A673 (cell line): ENCODE measurements at regions of chr4 and their contacts with region 1.

Region 1: DNA sequence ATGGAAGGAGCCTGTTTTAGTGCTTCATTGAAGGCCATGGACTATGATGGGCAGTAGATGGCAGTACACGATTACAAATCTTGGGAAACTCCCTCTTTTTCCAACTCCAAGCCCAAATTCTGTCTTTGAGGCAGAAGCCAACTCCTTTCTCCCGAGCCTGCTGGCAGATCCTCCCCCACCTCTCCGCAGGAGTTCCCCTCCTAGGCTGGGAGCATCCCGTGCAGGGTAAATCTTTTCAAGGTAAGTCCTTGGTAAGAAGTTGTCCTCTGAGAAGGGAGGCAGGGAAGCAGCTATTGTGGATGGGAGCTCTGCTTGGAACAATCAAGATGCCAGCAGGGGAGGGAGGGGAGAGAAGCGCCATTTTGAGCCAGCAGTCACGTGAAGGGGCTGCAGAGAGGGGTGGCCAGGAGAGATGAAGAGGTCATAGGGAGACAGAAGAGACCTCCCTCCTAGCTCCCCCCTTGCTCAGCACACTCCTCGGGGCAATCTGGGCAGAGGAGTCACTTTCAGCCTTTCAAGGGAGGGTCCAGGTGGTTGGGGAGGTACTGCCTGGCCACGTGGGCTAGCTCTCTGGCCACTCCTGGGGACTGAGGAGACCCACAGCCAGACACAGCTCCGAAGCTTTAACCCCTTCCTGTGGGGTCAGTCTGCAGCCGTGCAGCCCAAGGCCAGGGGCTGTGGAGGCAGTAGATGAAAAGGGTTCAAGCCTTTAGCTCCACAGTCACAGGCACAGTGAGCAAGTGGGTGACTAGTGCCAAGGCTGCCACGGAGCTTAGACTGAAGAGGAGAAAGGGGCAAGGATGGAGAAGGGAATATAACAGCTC is 9.6 kb downstream of the CC2D2A start:
- DNase-seq: peak; percentile 92
- H3K4me3 ChIP-seq: peak overlapping the region; percentile 59
- H3K27ac ChIP-seq: peak overlapping the region; percentile 69
- H3K4me1 ChIP-seq: peaks cover 9% of the 10 kb centered on the region
- H3K27me3 ChIP-seq: no peaks in the 10 kb centered on the region
- CTCF ChIP-seq: peak; percentile 82

Region 2: DNA sequence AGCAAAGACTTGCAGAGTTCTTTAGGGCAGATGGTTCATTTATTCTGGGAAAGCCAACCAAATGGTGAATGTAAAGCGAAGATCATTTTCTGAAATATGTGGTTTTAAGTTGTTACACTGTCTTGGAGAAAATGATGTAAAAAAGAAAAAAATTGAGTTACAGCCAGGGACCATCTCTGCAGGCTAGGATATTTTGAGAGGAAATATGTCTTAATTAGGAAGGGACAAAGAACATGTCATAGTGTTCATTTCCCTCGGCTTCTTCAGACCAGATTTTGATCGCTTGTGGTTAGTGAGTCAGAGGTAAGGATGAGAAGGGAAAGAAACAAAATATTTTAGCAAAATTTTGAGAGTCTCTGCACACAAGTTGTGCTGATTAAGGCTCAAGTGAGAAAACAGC is 110.4 kb before region 1 on chr4:
- CTCF ChIA-PET with region 1: no interaction called
- POLR2A ChIA-PET with region 1: no interaction called
- intact Hi-C with region 1: no loop called
- DNase-seq: peak; percentile 67
- H3K4me3 ChIP-seq: no peak overlapping the region
- H3K27ac ChIP-seq: no peak overlapping the region
- H3K4me1 ChIP-seq: peaks cover 13% of the 10 kb centered on the region
- H3K27me3 ChIP-seq: no peaks in the 10 kb centered on the region
- CTCF ChIP-seq: no peak

Region 3: GRCh38 chr4:15805583-15806517 is 326.5 kb after region 1 on chr4:
- CTCF ChIA-PET with region 1: interaction called, 7 read pairs
- POLR2A ChIA-PET with region 1: no interaction called
- intact Hi-C with region 1: loop called (anchors 1 kb)
- DNase-seq: peak; percentile 84
- H3K4me3 ChIP-seq: no peak overlapping the region
- H3K27ac ChIP-seq: no peak overlapping the region
- H3K4me1 ChIP-seq: peaks cover 6% of the 10 kb centered on the region
- H3K27me3 ChIP-seq: no peaks in the 10 kb centered on the region
- CTCF ChIP-seq: peak; percentile 79

Region 4: DNA sequence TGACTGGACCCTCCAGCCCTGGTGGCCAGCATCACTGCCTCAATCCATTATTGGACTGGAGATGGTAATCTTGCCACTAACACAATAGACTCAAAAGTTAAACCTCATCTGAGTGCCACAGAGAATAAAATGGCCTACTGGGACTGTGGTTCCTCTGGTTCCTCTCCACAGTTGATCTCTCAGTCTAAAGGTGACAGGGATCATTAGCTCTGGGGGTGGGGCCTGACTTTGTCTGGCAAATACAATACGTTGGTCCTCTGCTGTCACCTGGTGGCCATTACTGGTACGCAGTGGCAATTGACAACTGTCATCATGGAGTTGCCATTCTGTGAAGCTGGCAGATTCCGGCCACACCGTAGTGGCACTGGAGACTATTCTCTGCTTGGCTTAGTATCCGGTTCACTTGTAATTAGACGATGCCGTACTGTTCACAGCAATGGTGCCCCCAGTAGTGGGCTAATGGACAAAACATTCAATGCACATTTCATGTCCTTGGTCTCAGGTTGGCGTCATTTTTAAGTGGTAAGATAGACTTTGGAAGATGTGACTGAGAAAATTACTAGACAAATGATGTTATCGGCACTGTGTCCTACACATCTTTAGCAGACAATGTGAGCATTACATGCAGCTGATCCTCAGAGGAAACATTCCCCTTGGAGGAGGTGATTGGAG is 477.0 kb after region 1 on chr4:
- CTCF ChIA-PET with region 1: interaction called, 10 read pairs
- POLR2A ChIA-PET with region 1: no interaction called
- intact Hi-C with region 1: loop called (anchors 2 kb)
- DNase-seq: peak; percentile 78
- H3K4me3 ChIP-seq: no peak overlapping the region
- H3K27ac ChIP-seq: no peak overlapping the region
- H3K4me1 ChIP-seq: no peaks in the 10 kb centered on the region
- H3K27me3 ChIP-seq: no peaks in the 10 kb centered on the region
- CTCF ChIP-seq: peak; percentile 92

Region 5: DNA sequence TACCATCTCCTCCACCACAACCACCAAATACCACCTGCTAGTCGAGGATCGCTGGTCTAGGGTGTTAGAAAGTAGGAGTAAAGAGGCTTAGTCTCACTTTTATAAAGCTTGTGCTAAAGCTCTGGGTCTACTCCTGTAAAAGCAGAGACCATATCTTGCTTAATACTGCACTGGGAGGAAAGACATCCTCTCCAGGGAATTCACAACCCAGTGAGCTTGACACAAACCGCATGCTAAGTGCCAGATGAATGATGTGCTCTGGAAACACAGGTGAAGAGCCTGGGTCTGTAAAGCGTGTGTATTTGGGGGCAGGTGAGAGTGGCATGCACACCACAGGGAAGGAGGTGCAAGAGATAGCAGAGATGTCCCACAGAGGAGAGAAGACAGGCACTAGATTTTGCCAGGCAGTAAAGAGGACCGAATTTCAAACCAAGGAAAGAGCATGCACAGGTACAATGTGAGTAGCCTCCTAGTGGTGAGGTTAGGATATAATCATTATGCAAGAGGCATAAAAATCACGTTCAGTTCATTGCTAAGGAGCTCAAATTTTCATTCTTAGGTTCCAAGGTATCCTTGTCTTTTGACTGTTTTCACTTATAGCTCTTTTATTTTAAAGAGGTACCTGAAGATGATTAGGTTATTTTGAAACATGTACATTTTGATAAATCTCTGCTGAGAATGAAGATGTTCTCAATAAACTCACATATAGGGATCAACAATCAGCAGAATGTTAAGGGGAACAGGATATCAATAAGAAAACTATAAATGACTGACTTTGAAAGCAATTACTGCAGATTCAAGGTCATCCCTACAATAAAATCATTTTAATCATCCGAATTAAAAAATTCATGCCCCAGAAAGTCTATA is 726.2 kb after region 1 on chr4:
- CTCF ChIA-PET with region 1: no interaction called
- POLR2A ChIA-PET with region 1: no interaction called
- intact Hi-C with region 1: loop called (anchors 10 kb)
- DNase-seq: peak; percentile 61
- H3K4me3 ChIP-seq: no peak overlapping the region
- H3K27ac ChIP-seq: peak overlapping the region; percentile 19
- H3K4me1 ChIP-seq: peaks cover 35% of the 10 kb centered on the region
- H3K27me3 ChIP-seq: no peaks in the 10 kb centered on the region
- CTCF ChIP-seq: peak; percentile 73